Gastrocnemius medialis (tissue), 4 donors: ENCODE measurements at regions of chr4 and their contacts with region 1.

Region 1: GRCh38 chr4:76949276-76950051 is at the start of gene SEPTIN11:
- DNase-seq: peak; percentile 83 to 86
- ATAC-seq: peak; percentile 79 to 80
- H3K4me3 ChIP-seq: peak within 1 kb of the TSS; percentile 79 to 97 (median 90)
- H3K27ac ChIP-seq: peak within 1 kb of the TSS; percentile 88 to 96 (median 94)
- H3K4me1 ChIP-seq: peaks cover 18 to 19% of the 10 kb centered on the region in 2 donors
- H3K27me3 ChIP-seq: no peaks in the 10 kb centered on the region
- CTCF ChIP-seq: peak in 1 of 5 experiments; percentile 19
- POLR2A ChIP-seq: peak; percentile 85 to 92
- total RNA-seq, gene SEPTIN11: 11.3 to 104 (median 47.9) TPM

Region 2: GRCh38 chr4:76179398-76180318 is 769.8 kb before region 1 on chr4:
- in situ Hi-C with region 1: loop called in 1 of 4 experiments (anchors 25 kb)
- intact Hi-C with region 1: no loop called
- DNase-seq: peak; percentile 68 to 84
- ATAC-seq: peak; percentile 86 to 92
- H3K4me3 ChIP-seq: no peak overlapping the region
- H3K27ac ChIP-seq: peak overlapping the region; percentile 34 to 70 (median 56)
- H3K4me1 ChIP-seq: peaks cover 15 to 30% of the 10 kb centered on the region in 2 donors
- H3K27me3 ChIP-seq: no peaks in the 10 kb centered on the region
- CTCF ChIP-seq: peak; percentile 89 to 96 (median 93)
- POLR2A ChIP-seq: no peak

Region 3: GRCh38 chr4:76974150-76974549 is 24.7 kb after region 1 on chr4:
- in situ Hi-C with region 1: no loop called
- intact Hi-C with region 1: loop called (anchors 2 kb)
- DNase-seq: no peak
- ATAC-seq: peak; percentile 98
- H3K4me3 ChIP-seq: no peak overlapping the region
- H3K27ac ChIP-seq: peak overlapping the region; percentile 14 to 64 (median 18)
- H3K4me1 ChIP-seq: peaks cover 12 to 18% of the 10 kb centered on the region in 2 donors
- H3K27me3 ChIP-seq: no peaks in the 10 kb centered on the region
- CTCF ChIP-seq: no peak
- POLR2A ChIP-seq: no peak

Region 4: GRCh38 chr4:76993787-76994641 is 44.5 kb after region 1 on chr4:
- in situ Hi-C with region 1: no loop called
- intact Hi-C with region 1: loop called (anchors 2 kb)
- DNase-seq: peak; percentile 43 to 62
- ATAC-seq: peak; percentile 98
- H3K4me3 ChIP-seq: peak overlapping the region in 3 of 4 donors; percentile 11 to 34 (median 21)
- H3K27ac ChIP-seq: peak overlapping the region; percentile 74 to 85 (median 82)
- H3K4me1 ChIP-seq: peaks cover 13 to 26% of the 10 kb centered on the region in 2 donors
- H3K27me3 ChIP-seq: no peaks in the 10 kb centered on the region
- CTCF ChIP-seq: no peak
- POLR2A ChIP-seq: peak in 1 of 2 donors; percentile 31

Region 5: DNA sequence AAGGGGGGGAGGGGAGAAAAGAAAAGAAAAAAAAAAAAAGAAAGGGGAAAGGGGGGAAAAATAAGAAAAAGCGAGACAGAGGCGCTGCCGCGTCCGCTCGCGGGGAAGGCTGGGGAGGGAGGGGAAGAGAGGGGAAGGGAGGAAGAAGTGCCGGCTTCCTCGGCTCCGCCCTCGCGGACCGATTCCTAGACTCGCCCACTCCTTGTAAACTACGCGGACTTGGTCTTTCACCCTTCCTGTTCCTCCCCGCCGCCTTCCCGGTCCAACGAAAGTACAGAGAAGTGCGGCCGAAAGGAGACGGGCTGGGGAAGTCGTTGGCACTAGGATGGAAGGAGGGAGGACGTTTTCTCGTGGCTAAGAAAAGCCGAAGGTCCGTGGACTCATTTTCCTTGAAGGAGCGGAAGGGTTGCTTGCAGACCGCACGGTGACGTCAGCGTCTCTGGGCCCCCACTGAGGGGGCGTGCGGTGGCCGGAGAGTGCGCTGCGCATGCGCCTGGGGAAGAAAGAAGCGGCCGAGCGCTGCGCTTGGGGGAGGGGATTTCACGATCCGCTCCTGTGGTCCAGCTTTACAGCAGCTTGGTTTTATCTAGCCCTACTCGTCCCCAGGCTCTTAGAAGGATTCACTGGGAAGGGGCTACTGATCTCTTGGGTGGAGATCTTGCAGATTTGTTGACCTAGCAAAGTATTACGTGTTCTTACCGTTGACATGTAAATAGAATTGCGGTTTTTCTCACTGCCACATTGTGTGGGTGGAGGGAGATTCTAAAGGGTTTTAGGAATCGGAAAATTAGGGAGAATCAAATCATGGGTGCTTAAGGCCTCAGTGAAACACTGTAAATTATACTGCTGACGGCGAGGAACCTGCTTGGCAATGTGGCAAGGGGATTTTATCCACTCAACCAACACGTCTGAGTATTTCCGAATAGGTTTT is 126.7 kb after region 1 on chr4 and contains the start of gene CCNI:
- in situ Hi-C with region 1: no loop called
- intact Hi-C with region 1: loop called (anchors 2 kb)
- DNase-seq: peak; percentile 94 to 95
- ATAC-seq: peak; percentile 93
- H3K4me3 ChIP-seq: peak within 1 kb of the TSS; percentile 87 to 95 (median 92)
- H3K27ac ChIP-seq: peak within 1 kb of the TSS; percentile 98 to 99 (median 99)
- H3K4me1 ChIP-seq: peaks cover 40 to 49% of the 10 kb centered on the region in 2 donors
- H3K27me3 ChIP-seq: no peaks in the 10 kb centered on the region
- CTCF ChIP-seq: peak in 1 of 5 experiments; percentile 11
- POLR2A ChIP-seq: peak; percentile 66 to 76
- total RNA-seq, gene CCNI: 82.8 to 138 (median 129) TPM